ENCODE measurements at regions of chr9 and their contacts with region 1.

Region 1: DNA sequence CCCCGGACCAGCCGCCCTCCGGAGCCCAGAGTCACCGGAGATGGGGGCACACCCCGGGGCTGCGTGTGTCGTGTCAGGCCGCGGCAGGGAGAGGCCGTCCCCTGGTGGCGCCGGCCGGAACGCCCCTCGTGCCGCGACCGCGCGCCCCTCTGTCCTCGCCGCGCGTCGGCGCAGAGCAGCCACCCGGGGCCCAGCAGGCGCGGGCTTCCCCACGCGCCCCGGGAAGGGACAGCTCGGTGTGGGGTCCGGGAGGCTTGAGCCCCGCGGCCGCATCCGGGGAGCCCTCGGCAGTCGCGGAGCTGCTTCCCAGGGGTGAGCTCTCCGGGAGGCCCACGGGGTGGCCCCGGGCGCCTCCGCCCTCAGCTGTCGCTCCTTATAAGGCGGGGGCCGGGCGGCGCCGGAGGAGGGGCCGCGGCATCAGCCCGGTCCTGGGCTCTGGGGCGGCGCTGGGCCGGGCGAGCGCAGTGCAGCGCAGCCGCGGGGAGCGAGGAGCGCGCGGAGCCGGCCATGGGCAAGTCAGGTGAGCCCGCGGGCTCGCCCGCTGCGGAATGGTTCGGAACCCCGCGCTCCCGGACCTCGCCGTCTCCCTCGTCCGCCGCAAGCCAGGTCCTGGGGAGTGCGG is at the start of gene GLIPR2:
- DNase-seq: peak; percentile 53 to 91 (median 72)
- ATAC-seq: peak; percentile 93
- H3K4me3 ChIP-seq: peak within 1 kb of the TSS; percentile 85
- H3K4me3 Mint-ChIP-seq: peak within 1 kb of the TSS; percentile 98
- H3K27ac ChIP-seq: peak within 1 kb of the TSS; percentile 53 to 59
- H3K27ac Mint-ChIP-seq: peak within 1 kb of the TSS; percentile 92
- H3K4me1 ChIP-seq: peaks cover 53% of the 10 kb centered on the region
- H3K4me1 Mint-ChIP-seq: peaks cover 51% of the 10 kb centered on the region
- H3K27me3 ChIP-seq: no peaks in the 10 kb centered on the region
- H3K27me3 Mint-ChIP-seq: no peaks in the 10 kb centered on the region
- CTCF ChIP-seq: no peak
- total RNA-seq, gene GLIPR2: 13.6 to 13.7 TPM

Region 2: DNA sequence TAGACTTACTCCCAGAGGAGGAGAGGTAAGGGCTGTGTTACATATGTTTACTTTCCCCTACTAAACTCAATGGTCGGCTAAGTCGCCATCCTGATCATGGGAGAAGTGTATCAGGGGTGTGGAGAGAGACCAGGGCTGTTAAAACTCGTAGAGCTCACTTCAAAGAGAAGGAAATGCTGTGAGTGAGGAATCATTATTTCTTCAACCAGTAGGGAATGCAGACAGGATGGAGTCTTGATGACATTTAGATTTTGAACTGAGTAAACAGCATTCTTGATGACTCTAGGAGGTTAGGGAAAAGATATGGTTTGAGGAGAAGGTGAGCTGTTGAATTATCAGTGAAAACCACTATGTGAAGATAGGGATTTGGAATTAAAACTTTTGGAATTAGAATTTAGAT is 82.4 kb before region 1 on chr9:
- CTCF ChIA-PET with region 1: no interaction called
- POLR2A ChIA-PET with region 1: no interaction called
- intact Hi-C with region 1: no loop called
- DNase-seq: no peak
- ATAC-seq: no peak
- H3K4me3 ChIP-seq: no peak overlapping the region
- H3K4me3 Mint-ChIP-seq: no peak overlapping the region
- H3K27ac ChIP-seq: no peak overlapping the region
- H3K27ac Mint-ChIP-seq: no peak overlapping the region
- H3K4me1 ChIP-seq: no peaks in the 10 kb centered on the region
- H3K4me1 Mint-ChIP-seq: peaks cover 5% of the 10 kb centered on the region
- H3K27me3 ChIP-seq: no peaks in the 10 kb centered on the region
- H3K27me3 Mint-ChIP-seq: no peaks in the 10 kb centered on the region
- CTCF ChIP-seq: no peak

Region 3: GRCh38 chr9:36148311-36149051 is 12.1 kb after region 1 on chr9:
- CTCF ChIA-PET with region 1: interaction called, 11 read pairs
- POLR2A ChIA-PET with region 1: interaction called, 20 read pairs
- intact Hi-C with region 1: loop called (anchors 1 kb)
- DNase-seq: peak; percentile 36 to 88 (median 66)
- ATAC-seq: no peak
- H3K4me3 ChIP-seq: no peak overlapping the region
- H3K4me3 Mint-ChIP-seq: peak overlapping the region; percentile 31
- H3K27ac ChIP-seq: peak overlapping the region; percentile 52 to 58
- H3K27ac Mint-ChIP-seq: peak overlapping the region; percentile 98
- H3K4me1 ChIP-seq: peaks cover 99% of the 10 kb centered on the region
- H3K4me1 Mint-ChIP-seq: peaks cover 84% of the 10 kb centered on the region
- H3K27me3 ChIP-seq: no peaks in the 10 kb centered on the region
- H3K27me3 Mint-ChIP-seq: no peaks in the 10 kb centered on the region
- CTCF ChIP-seq: no peak